ENCODE measurements at regions of chr3 and their contacts with region 1.

Region 1: GRCh38 chr3:152322756-152323155 is 54.0 kb downstream of the MBNL1 start:
- DNase-seq: peak; percentile 39
- ATAC-seq: no peak
- H3K4me3 ChIP-seq: no peak overlapping the region
- H3K4me3 Mint-ChIP-seq: peak overlapping the region; percentile 55
- H3K27ac ChIP-seq: peak overlapping the region in 1 of 2 donors; percentile 66
- H3K27ac Mint-ChIP-seq: peak overlapping the region; percentile 18
- H3K4me1 ChIP-seq: peaks cover 24 to 53% of the 10 kb centered on the region in 2 donors
- H3K4me1 Mint-ChIP-seq: peaks cover 64% of the 10 kb centered on the region
- H3K27me3 ChIP-seq: no peaks in the 10 kb centered on the region
- H3K27me3 Mint-ChIP-seq: no peaks in the 10 kb centered on the region
- CTCF ChIP-seq: no peak

Region 2: GRCh38 chr3:152281133-152281713 is 41.5 kb before region 1 on chr3:
- CTCF ChIA-PET with region 1: interaction called, 3 read pairs
- POLR2A ChIA-PET with region 1: no interaction called
- intact Hi-C with region 1: loop called (anchors 5 kb)
- DNase-seq: no peak
- ATAC-seq: no peak
- H3K4me3 ChIP-seq: peak overlapping the region in 1 of 5 experiments; percentile 5
- H3K4me3 Mint-ChIP-seq: peak overlapping the region; percentile 68
- H3K27ac ChIP-seq: peak overlapping the region in 1 of 2 donors; percentile 73
- H3K27ac Mint-ChIP-seq: peak overlapping the region; percentile 62
- H3K4me1 ChIP-seq: peaks cover 63 to 90% of the 10 kb centered on the region in 2 donors
- H3K4me1 Mint-ChIP-seq: peaks cover 79% of the 10 kb centered on the region
- H3K27me3 ChIP-seq: no peaks in the 10 kb centered on the region
- H3K27me3 Mint-ChIP-seq: no peaks in the 10 kb centered on the region
- CTCF ChIP-seq: no peak

Region 3: GRCh38 chr3:152309535-152310307 is 13.0 kb before region 1 on chr3:
- CTCF ChIA-PET with region 1: interaction called, 5 read pairs
- POLR2A ChIA-PET with region 1: no interaction called
- intact Hi-C with region 1: loop called (anchors 2 kb)
- DNase-seq: no peak
- ATAC-seq: no peak
- H3K4me3 ChIP-seq: no peak overlapping the region
- H3K4me3 Mint-ChIP-seq: no peak overlapping the region
- H3K27ac ChIP-seq: peak overlapping the region in 1 of 2 donors; percentile 60
- H3K27ac Mint-ChIP-seq: peak overlapping the region; percentile 50
- H3K4me1 ChIP-seq: peaks cover 20 to 23% of the 10 kb centered on the region in 2 donors
- H3K4me1 Mint-ChIP-seq: peaks cover 58% of the 10 kb centered on the region
- H3K27me3 ChIP-seq: no peaks in the 10 kb centered on the region
- H3K27me3 Mint-ChIP-seq: no peaks in the 10 kb centered on the region
- CTCF ChIP-seq: no peak

Region 4: DNA sequence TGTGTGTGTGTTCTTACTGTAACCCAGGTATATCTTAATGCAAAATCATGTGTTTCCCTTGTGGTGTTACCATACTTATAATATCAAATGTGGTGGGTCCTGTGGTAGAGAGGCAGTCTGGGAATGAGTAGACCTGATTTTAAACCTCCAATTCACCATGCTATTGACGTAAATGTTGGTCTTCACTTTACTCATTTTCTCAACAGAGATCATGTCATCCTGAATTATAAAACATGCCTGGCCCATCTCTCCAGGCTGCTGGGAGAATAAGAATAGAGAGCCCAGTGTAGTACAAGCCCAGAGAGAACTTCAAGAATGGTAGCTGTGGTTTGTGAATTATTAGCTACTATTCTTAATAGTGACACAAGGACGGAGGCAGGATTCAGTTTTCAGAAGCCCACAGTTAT is 34.1 kb after region 1 on chr3:
- CTCF ChIA-PET with region 1: no interaction called
- POLR2A ChIA-PET with region 1: no interaction called
- intact Hi-C with region 1: no loop called
- DNase-seq: no peak
- ATAC-seq: no peak
- H3K4me3 ChIP-seq: no peak overlapping the region
- H3K4me3 Mint-ChIP-seq: no peak overlapping the region
- H3K27ac ChIP-seq: peak overlapping the region in 1 of 2 donors; percentile 54
- H3K27ac Mint-ChIP-seq: peak overlapping the region; percentile 51
- H3K4me1 ChIP-seq: peaks cover 16 to 41% of the 10 kb centered on the region in 2 donors
- H3K4me1 Mint-ChIP-seq: peaks cover 64% of the 10 kb centered on the region
- H3K27me3 ChIP-seq: no peaks in the 10 kb centered on the region
- H3K27me3 Mint-ChIP-seq: no peaks in the 10 kb centered on the region
- CTCF ChIP-seq: no peak